Endothelial cell of umbilical vein (primary cell): ENCODE measurements at regions of chr3 and their contacts with region 1.

Region 1: GRCh38 chr3:61979638-61980037 is 393.7 kb downstream of the FEZF2 start:
- DNase-seq: peak; percentile 80
- H3K4me3 ChIP-seq: no peak overlapping the region
- H3K27ac ChIP-seq: peak overlapping the region; percentile 85
- H3K4me1 ChIP-seq: peaks cover 35% of the 10 kb centered on the region
- H3K27me3 ChIP-seq: no peaks in the 10 kb centered on the region
- CTCF ChIP-seq: no peak
- POLR2A ChIP-seq: peak; percentile 64

Region 2: DNA sequence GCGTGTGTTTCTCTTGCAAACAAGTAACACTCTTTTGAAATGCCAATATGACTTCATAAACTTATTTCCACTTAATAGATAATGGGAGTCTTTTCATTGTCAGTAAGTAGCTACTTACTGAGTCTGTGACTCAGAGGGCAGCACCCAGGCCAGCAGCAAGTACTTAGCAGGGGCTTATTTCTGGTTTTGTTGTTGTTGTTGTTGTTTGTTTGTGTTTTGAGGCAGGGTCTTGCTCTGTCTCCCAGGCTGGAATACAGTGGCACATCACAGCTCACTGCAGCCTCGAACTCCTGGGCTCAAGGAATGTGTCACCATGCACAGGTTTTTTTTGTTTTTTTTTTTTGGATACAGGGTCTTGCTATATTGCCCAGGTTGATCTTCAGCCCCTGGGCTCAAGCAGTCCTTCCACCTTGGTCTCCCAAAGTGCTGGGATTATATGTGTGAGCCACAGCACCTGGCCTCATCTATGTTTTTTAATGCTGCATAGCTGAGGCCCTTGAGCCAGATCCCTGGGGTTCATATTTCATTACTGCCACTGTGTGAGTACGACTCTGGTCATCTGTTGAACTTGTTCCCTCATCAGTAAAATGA is 41.0 kb after region 1 on chr3:
- CTCF ChIA-PET with region 1: no interaction called
- POLR2A ChIA-PET with region 1: no interaction called
- dilution Hi-C with region 1: no loop called
- intact Hi-C with region 1: loop called (anchors 2 kb)
- DNase-seq: peak; percentile 43
- H3K4me3 ChIP-seq: no peak overlapping the region
- H3K27ac ChIP-seq: peak overlapping the region; percentile 71
- H3K4me1 ChIP-seq: peaks cover 29% of the 10 kb centered on the region
- H3K27me3 ChIP-seq: no peaks in the 10 kb centered on the region
- CTCF ChIP-seq: no peak
- POLR2A ChIP-seq: no peak

Region 3: GRCh38 chr3:62139936-62140335 is 160.3 kb after region 1 on chr3:
- CTCF ChIA-PET with region 1: no interaction called
- POLR2A ChIA-PET with region 1: no interaction called
- dilution Hi-C with region 1: no loop called
- intact Hi-C with region 1: loop called (anchors 5 kb)
- DNase-seq: no peak
- H3K4me3 ChIP-seq: no peak overlapping the region
- H3K27ac ChIP-seq: no peak overlapping the region
- H3K4me1 ChIP-seq: peaks cover 14% of the 10 kb centered on the region
- H3K27me3 ChIP-seq: no peaks in the 10 kb centered on the region
- CTCF ChIP-seq: no peak
- POLR2A ChIP-seq: no peak

Region 4: GRCh38 chr3:62169906-62170660 is 190.4 kb after region 1 on chr3:
- CTCF ChIA-PET with region 1: no interaction called
- POLR2A ChIA-PET with region 1: no interaction called
- dilution Hi-C with region 1: no loop called
- intact Hi-C with region 1: loop called (anchors 5 kb)
- DNase-seq: peak; percentile 74
- H3K4me3 ChIP-seq: no peak overlapping the region
- H3K27ac ChIP-seq: peak overlapping the region; percentile 95
- H3K4me1 ChIP-seq: peaks cover 21% of the 10 kb centered on the region
- H3K27me3 ChIP-seq: no peaks in the 10 kb centered on the region
- CTCF ChIP-seq: no peak
- POLR2A ChIP-seq: no peak